Heart left ventricle (tissue), 16 donors: ENCODE measurements at regions of chr14 and their contacts with region 1.

Region 1: DNA sequence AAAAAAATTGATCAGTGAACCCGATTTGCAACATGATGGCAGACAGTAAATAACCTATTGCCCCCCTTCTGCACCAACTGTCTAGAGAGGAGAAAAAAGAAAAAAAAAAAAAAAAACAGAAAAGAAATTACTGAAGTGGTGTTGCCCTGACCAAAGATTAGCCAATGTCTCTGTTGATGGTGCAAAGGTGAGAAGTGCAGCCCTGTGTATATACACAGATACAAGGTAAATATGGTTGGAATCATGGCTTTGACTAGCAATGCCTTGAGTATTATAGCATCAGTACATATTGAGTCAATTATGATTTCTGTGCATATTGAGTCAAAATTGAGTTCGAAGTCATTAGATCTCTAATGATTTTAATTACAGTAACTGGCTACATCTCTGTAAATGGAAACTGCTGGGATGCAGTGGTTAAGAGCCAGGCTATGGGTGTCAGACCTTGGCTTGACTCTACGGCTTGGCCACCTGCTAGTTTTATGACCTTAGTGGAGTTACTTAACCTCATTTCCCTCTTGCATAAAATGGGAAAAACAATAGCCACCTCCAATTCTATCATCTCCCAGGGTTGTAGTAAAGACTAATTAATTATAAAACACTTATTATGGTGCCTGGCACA is 51.0 kb downstream of the EGLN3 start:
- DNase-seq: no peak
- ATAC-seq: no peak
- H3K4me3 ChIP-seq: no peak overlapping the region
- H3K27ac ChIP-seq: no peak overlapping the region
- H3K4me1 ChIP-seq: peaks cover 0 to 8% (median 0%) of the 10 kb centered on the region in 12 donors
- H3K27me3 ChIP-seq: no peaks in the 10 kb centered on the region
- CTCF ChIP-seq: no peak
- POLR2A ChIP-seq: no peak

Region 2: DNA sequence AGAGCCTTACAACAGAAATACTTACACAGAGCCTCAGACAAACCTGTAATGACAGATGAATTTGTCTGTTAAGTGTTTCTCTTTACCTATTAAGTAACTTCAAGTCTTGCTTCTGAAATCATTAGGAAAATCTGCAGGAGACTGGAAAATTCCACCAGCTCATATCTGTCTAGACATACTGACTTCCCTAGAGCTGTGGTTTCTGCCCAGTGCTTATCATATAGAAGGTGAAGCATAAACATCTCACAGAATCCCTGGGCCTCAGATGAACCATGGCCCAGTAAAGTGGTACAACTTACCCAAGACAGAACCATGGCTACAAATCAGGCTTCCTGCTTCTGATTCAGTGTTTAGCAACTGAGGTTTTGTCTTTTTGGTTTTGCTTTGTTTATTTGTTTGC is 40.5 kb before region 1 on chr14:
- intact Hi-C with region 1: loop called in 1 of 10 experiments (anchors 5 kb)
- DNase-seq: no peak
- ATAC-seq: no peak
- H3K4me3 ChIP-seq: no peak overlapping the region
- H3K27ac ChIP-seq: no peak overlapping the region
- H3K4me1 ChIP-seq: no peaks in the 10 kb centered on the region
- H3K27me3 ChIP-seq: no peaks in the 10 kb centered on the region
- CTCF ChIP-seq: no peak
- POLR2A ChIP-seq: no peak

Region 3: DNA sequence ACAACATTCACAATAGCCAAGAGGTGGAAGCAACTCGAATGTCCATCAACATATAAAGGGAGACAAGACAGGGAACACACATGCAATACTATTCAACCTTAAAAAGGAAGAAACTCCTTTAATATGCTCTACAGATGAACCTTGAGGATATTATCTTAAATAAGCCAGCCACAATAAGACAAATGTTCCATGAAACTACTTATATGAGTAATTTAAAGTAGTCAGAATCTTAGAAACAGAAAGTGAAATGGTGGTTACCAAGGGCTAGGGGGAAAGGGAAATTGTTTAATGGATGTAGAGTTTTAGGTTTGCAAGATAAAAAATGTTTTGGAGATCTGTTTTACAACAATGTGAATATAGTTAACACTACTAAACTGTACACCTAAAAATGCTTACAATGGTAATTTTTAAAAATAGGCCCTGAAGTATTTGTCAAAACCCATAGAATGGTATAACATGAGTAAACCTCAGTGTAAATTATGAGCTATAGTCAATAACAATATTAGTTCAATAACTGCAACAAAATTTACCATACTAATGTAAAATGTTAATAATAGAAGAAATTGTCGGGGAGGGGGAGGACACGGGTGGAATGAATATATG is 20.0 kb before region 1 on chr14:
- intact Hi-C with region 1: loop called in 1 of 10 experiments (anchors 2 kb)
- DNase-seq: no peak
- ATAC-seq: no peak
- H3K4me3 ChIP-seq: no peak overlapping the region
- H3K27ac ChIP-seq: no peak overlapping the region
- H3K4me1 ChIP-seq: no peaks in the 10 kb centered on the region
- H3K27me3 ChIP-seq: no peaks in the 10 kb centered on the region
- CTCF ChIP-seq: no peak
- POLR2A ChIP-seq: no peak

Region 4: GRCh38 chr14:34035177-34035933 is 135.5 kb after region 1 on chr14:
- intact Hi-C with region 1: no loop called
- DNase-seq: peak; percentile 59 to 86 (median 77)
- ATAC-seq: peak; percentile 84 to 92 (median 88)
- H3K4me3 ChIP-seq: no peak overlapping the region
- H3K27ac ChIP-seq: peak overlapping the region; percentile 63 to 91 (median 80)
- H3K4me1 ChIP-seq: peaks cover 0 to 42% (median 29%) of the 10 kb centered on the region in 12 donors
- H3K27me3 ChIP-seq: no peaks in the 10 kb centered on the region
- CTCF ChIP-seq: no peak
- POLR2A ChIP-seq: peak in 1 of 2 donors; percentile 43

Region 5: GRCh38 chr14:34120238-34120977 is 220.6 kb after region 1 on chr14:
- intact Hi-C with region 1: no loop called
- DNase-seq: no peak
- ATAC-seq: peak; percentile 20 to 70 (median 59)
- H3K4me3 ChIP-seq: no peak overlapping the region
- H3K27ac ChIP-seq: peak overlapping the region in 2 of 12 donors; percentile 7 to 39
- H3K4me1 ChIP-seq: peaks cover 0 to 7% (median 0%) of the 10 kb centered on the region in 12 donors
- H3K27me3 ChIP-seq: no peaks in the 10 kb centered on the region
- CTCF ChIP-seq: peak in 1 of 12 donors; percentile 7
- POLR2A ChIP-seq: no peak